ENCODE measurements at regions of chr4 and their contacts with region 1.

Region 1: DNA sequence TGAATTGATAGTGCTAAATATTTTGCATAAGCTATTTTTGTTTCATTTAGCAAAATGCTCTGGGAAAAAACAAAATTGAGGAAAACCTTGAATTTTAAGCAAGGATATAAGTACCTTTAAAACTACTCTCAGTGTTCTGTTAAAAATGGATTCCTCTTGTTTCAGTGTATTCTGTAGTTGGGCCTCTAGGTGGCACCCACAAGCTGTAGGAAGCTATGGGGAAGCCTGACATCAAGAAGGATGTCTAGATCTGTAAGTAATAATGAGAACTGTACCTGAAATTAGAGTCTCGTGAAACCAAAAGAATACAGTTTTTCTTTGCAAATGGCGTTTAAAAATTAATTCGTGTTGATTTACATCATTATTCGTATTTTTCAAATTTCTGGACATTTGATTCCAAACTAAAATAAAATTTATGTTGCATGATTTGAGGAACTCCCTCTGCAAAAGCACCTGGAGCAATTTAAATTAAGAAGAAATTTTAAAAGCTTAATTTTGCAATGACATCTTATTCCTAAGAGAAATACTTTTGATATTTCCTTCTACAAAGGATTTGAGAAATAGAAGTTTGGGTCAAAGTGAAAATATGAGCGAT is 51.2 kb downstream of the TMPRSS11E start:
- DNase-seq: peak; percentile 71
- ATAC-seq: peak; percentile 75
- H3K4me3 ChIP-seq: no peak overlapping the region
- H3K4me3 Mint-ChIP-seq: no peak overlapping the region
- H3K27ac ChIP-seq: no peak overlapping the region
- H3K27ac Mint-ChIP-seq: no peak overlapping the region
- H3K4me1 ChIP-seq: peaks cover 7 to 8% of the 10 kb centered on the region in 2 donors
- H3K4me1 Mint-ChIP-seq: peaks cover 10% of the 10 kb centered on the region
- H3K27me3 ChIP-seq: no peaks in the 10 kb centered on the region
- H3K27me3 Mint-ChIP-seq: no peaks in the 10 kb centered on the region
- CTCF ChIP-seq: peak; percentile 96

Region 2: GRCh38 chr4:68383115-68383514 is 115.4 kb before region 1 on chr4:
- CTCF ChIA-PET with region 1: no interaction called
- POLR2A ChIA-PET with region 1: no interaction called
- intact Hi-C with region 1: no loop called
- DNase-seq: no peak
- ATAC-seq: no peak
- H3K4me3 ChIP-seq: no peak overlapping the region
- H3K4me3 Mint-ChIP-seq: no peak overlapping the region
- H3K27ac ChIP-seq: no peak overlapping the region
- H3K27ac Mint-ChIP-seq: no peak overlapping the region
- H3K4me1 ChIP-seq: no peaks in the 10 kb centered on the region
- H3K4me1 Mint-ChIP-seq: no peaks in the 10 kb centered on the region
- H3K27me3 ChIP-seq: peaks cover 0 to 4% (median 1%) of the 10 kb centered on the region in 4 experiments
- H3K27me3 Mint-ChIP-seq: peaks cover 35% of the 10 kb centered on the region
- CTCF ChIP-seq: no peak

Region 3: GRCh38 chr4:68673143-68673542 is 174.6 kb after region 1 on chr4:
- CTCF ChIA-PET with region 1: no interaction called
- POLR2A ChIA-PET with region 1: no interaction called
- intact Hi-C with region 1: loop called (anchors 5 kb)
- DNase-seq: no peak
- ATAC-seq: no peak
- H3K4me3 ChIP-seq: no peak overlapping the region
- H3K4me3 Mint-ChIP-seq: no peak overlapping the region
- H3K27ac ChIP-seq: no peak overlapping the region
- H3K27ac Mint-ChIP-seq: no peak overlapping the region
- H3K4me1 ChIP-seq: no peaks in the 10 kb centered on the region
- H3K4me1 Mint-ChIP-seq: no peaks in the 10 kb centered on the region
- H3K27me3 ChIP-seq: no peaks in the 10 kb centered on the region
- H3K27me3 Mint-ChIP-seq: no peaks in the 10 kb centered on the region
- CTCF ChIP-seq: no peak

Region 4: DNA sequence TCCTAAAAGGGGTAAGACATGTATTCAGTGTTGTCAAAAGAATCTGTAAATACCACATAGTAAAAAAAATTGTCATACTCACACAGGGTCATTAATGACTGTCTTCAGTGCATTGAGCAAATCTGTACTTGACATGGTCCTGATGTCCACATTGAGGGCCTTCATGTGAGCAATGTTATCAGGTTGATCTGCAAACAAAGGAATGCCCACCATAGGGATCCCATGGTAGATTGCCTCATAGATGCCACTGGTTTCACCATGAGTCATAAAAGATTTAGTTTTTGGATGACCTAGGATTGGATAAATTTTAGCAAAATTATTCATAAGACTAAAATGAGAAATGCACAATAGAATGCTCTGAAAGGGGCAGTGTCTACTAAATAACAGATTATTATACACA is 210.1 kb after region 1 on chr4:
- CTCF ChIA-PET with region 1: no interaction called
- POLR2A ChIA-PET with region 1: no interaction called
- intact Hi-C with region 1: no loop called
- DNase-seq: no peak
- ATAC-seq: no peak
- H3K4me3 ChIP-seq: no peak overlapping the region
- H3K4me3 Mint-ChIP-seq: no peak overlapping the region
- H3K27ac ChIP-seq: no peak overlapping the region
- H3K27ac Mint-ChIP-seq: no peak overlapping the region
- H3K4me1 ChIP-seq: no peaks in the 10 kb centered on the region
- H3K4me1 Mint-ChIP-seq: no peaks in the 10 kb centered on the region
- H3K27me3 ChIP-seq: no peaks in the 10 kb centered on the region
- H3K27me3 Mint-ChIP-seq: no peaks in the 10 kb centered on the region
- CTCF ChIP-seq: no peak

Region 5: DNA sequence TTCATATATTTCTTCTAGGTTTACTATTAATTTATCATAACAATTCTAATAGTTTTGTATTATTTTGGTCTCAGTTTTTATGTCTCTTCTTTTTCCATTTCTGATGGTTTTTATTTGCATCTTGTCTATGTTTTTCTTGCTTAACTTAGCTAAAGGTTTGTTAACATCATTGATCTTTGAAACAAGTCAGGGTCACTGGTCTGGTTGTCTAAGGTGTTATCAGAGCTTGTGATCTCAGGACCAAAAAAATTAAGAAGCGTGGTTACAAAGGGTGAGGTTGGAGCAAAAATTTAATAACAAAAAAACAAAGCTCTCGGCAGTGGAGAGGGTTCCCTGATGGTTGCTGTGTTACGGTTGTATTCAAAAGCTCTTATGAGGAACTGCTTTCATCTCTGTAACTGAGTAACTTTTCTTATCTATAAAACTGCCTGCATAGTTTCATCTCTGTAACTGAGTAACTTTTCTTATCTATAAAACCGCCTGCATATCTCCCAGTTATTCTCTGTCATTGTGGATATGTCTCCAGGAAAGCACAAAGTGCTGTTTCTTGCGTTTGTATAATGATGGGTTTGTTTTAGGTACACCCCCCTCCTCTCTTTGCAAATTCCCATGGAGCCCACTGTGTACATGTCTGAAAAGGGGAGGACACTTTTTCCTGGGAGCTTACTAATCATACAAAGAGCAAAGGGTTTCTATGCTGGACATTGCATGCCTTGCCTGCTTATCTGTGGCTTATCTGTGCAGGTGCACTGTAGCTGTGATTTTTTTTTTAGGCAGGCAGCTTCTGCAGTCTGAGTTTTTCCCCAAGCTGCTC is 234.3 kb after region 1 on chr4:
- CTCF ChIA-PET with region 1: no interaction called
- POLR2A ChIA-PET with region 1: no interaction called
- intact Hi-C with region 1: no loop called
- DNase-seq: no peak
- ATAC-seq: no peak
- H3K4me3 ChIP-seq: no peak overlapping the region
- H3K4me3 Mint-ChIP-seq: no peak overlapping the region
- H3K27ac ChIP-seq: no peak overlapping the region
- H3K27ac Mint-ChIP-seq: no peak overlapping the region
- H3K4me1 ChIP-seq: no peaks in the 10 kb centered on the region
- H3K4me1 Mint-ChIP-seq: no peaks in the 10 kb centered on the region
- H3K27me3 ChIP-seq: no peaks in the 10 kb centered on the region
- H3K27me3 Mint-ChIP-seq: no peaks in the 10 kb centered on the region
- CTCF ChIP-seq: no peak